ENCODE measurements at regions of chr4 and their contacts with region 1.

Region 1: DNA sequence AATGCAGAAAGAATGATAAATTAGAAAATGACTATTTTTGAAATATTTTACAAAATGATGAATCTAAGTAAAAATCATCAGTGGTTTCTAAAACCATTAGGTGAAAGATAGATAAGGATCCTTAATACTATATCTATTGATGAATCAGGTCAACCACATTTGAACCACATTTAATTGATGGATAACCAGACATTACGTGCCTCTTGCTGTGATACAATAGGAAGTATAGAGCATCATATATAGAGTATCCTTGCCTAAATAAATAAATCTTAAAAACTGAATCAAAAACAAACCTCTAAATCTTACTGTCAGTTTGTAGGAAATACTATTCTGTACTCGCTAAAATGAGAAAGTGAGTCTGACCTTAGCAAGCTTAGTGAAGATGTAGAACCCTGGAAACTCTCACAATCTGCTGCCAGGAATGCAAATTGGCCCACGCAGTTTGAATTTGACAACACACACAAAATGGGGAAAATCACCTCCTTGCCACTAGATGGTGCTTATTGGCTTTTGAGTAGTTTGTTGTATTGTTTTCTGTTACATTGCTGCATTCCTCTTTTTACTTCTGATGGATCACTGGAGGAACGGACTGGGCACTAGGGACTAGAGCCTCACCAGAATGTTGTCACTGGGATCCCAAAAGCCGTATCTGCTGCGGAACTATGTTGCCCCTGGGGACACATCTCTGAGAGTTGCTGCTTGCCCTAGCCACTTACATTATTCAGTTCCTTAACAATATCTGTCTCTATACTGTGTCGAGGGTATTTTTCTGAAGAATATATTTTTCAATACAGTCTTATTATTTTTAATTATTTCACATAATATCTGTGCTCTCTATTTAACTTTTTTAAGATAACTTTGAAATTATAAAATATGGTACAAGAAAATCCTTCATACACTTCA is 25.4 kb upstream of the SLAIN2 start:
- DNase-seq: no peak
- H3K4me3 Mint-ChIP-seq: no peak overlapping the region
- H3K27ac Mint-ChIP-seq: no peak overlapping the region
- H3K4me1 Mint-ChIP-seq: peaks cover 6% of the 10 kb centered on the region
- H3K27me3 Mint-ChIP-seq: peaks cover 2% of the 10 kb centered on the region

Region 2: GRCh38 chr4:48064349-48064748 is 251.6 kb before region 1 on chr4:
- intact Hi-C with region 1: no loop called
- DNase-seq: no peak
- H3K4me3 Mint-ChIP-seq: no peak overlapping the region
- H3K27ac Mint-ChIP-seq: no peak overlapping the region
- H3K4me1 Mint-ChIP-seq: no peaks in the 10 kb centered on the region
- H3K27me3 Mint-ChIP-seq: peaks cover 2% of the 10 kb centered on the region

Region 3: DNA sequence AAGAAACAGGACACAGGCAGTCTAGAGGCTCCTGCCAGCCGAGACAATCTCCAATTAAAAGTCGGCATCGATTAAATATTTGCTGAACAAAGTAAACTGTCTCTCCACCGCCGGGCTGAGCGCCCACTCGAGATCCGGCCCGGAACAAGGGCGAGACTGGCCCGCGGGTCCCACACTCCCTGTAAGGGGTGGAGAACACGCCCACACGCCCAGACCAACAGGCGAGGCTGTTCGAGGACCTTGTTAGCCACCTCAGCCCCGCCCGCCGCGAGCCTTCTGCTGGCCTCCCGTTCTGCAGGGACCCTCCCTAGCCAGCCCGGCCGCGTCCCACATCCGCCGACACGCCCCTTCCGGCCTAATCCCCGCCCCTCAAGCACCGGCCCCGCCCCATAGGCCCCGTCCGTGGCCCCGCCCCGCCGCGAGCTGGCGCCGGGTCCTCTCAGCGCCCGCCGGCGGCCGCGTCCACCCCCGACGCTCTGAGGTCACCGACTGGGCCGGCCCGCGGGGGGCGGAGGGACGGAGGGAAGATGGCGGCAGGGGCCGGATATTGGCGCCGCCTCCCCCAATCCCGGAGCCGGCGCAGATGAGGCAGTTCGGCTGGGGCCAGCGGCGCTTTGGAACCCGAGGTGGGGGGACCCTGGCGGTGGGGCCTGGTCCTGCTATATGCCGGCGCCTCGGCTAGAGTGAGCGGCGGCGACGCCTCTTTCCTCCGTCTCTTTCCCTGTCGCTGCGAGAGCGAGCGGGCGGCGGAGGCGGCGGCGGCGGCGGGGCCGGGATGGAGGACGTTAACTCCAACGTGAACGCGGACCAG is 25.2 kb after region 1 on chr4 and contains the start of gene SLAIN2:
- intact Hi-C with region 1: loop called (anchors 1 kb)
- DNase-seq: peak; percentile 98
- H3K4me3 Mint-ChIP-seq: peak within 1 kb of the TSS; percentile 98
- H3K27ac Mint-ChIP-seq: peak within 1 kb of the TSS; percentile 98
- H3K4me1 Mint-ChIP-seq: peaks cover 74% of the 10 kb centered on the region
- H3K27me3 Mint-ChIP-seq: no peaks in the 10 kb centered on the region
- total RNA-seq, gene SLAIN2: 71.4 and 79.4 TPM in 2 replicates

Region 4: DNA sequence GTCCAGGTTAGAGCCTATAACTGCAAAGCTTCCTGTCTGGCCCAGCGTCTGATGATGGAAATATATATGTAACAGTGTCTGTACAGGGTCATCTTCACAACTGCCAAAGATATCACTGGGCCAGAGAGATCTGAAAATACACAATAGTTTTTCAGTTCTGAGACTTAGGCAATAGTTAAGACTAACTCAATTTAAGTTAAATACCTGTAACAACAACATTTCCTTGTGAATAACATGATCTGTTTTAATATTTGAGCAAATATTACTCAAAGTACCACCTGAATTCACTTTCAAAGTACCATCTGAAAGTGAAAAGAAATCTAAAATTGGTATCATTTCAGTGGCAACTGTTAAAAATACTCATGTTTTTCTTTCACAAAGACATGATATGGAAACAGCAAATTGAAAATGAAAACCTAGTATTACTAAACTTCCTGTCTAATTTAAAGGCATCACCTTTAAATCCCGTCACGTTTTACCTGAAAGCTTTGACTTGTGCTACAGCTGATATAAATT is 183.6 kb after region 1 on chr4:
- intact Hi-C with region 1: loop called (anchors 5 kb)
- DNase-seq: no peak
- H3K4me3 Mint-ChIP-seq: no peak overlapping the region
- H3K27ac Mint-ChIP-seq: peak overlapping the region; percentile 18
- H3K4me1 Mint-ChIP-seq: peaks cover 15% of the 10 kb centered on the region
- H3K27me3 Mint-ChIP-seq: no peaks in the 10 kb centered on the region

Region 5: GRCh38 chr4:48546336-48546735 is 230.4 kb after region 1 on chr4:
- intact Hi-C with region 1: loop called (anchors 1 kb)
- DNase-seq: no peak
- H3K4me3 Mint-ChIP-seq: no peak overlapping the region
- H3K27ac Mint-ChIP-seq: no peak overlapping the region
- H3K4me1 Mint-ChIP-seq: peaks cover 5% of the 10 kb centered on the region
- H3K27me3 Mint-ChIP-seq: no peaks in the 10 kb centered on the region

Region 6: DNA sequence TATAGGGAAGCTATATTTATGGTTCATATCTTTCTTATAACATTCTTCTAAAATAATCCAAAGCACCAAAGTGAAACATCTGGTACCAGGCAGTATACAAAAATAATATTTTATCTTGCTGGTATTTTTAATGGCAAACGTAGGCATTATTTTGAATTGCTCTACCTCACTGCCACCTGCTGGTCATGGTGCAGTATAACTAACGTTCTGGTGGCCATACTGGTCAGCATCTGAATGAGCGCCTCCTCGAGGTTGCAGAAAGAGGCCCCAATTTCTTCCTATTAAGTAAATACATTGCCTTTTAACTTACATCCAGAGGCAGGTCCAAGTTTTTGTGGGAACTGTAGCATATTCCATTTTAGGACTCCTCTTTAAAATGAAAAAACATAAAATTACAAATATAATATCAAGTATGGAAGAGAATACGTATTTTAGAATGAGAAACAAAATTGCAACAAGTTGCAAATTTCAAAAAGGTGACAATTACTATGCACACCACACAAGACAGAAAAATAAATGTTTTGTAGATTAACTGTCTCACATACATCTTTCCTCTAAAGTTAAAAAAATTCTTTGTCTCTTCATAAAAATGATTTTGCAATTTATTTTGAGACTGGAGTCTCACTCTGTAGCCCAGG is 647.2 kb after region 1 on chr4:
- intact Hi-C with region 1: loop called (anchors 5 kb)
- DNase-seq: peak; percentile 54
- H3K4me3 Mint-ChIP-seq: no peak overlapping the region
- H3K27ac Mint-ChIP-seq: no peak overlapping the region
- H3K4me1 Mint-ChIP-seq: no peaks in the 10 kb centered on the region
- H3K27me3 Mint-ChIP-seq: peaks cover 4% of the 10 kb centered on the region